OCI-LY7 (cell line): ENCODE measurements at regions of chrX and their contacts with region 1.

Region 1: GRCh38 chrX:153927922-153928760 is 2.1 kb upstream of the ARHGAP4 start:
- DNase-seq: peak; percentile 96
- H3K4me3 ChIP-seq: peak overlapping the region; percentile 99
- H3K27ac ChIP-seq: peak overlapping the region; percentile 100
- H3K4me1 ChIP-seq: peaks cover 42% of the 10 kb centered on the region
- CTCF ChIP-seq: no peak

Region 2: GRCh38 chrX:153794018-153794896 is 133.9 kb before region 1 on chrX and contains the starts of genes IDH3G and SSR4:
- CTCF ChIA-PET with region 1: no interaction called
- POLR2A ChIA-PET with region 1: interaction called, 4 read pairs
- intact Hi-C with region 1: loop called (anchors 1 kb)
- DNase-seq: peak; percentile 94
- H3K4me3 ChIP-seq: peak within 1 kb of the TSS; percentile 100
- H3K27ac ChIP-seq: peak within 1 kb of the TSS; percentile 66
- H3K4me1 ChIP-seq: peaks cover 14% of the 10 kb centered on the region
- CTCF ChIP-seq: no peak
- total RNA-seq, gene IDH3G: 52.5 and 53.2 TPM in 2 replicates
- total RNA-seq, gene SSR4: 121 and 165 TPM in 2 replicates

Region 3: GRCh38 chrX:153947009-153947769 is 19.0 kb after region 1 on chrX:
- CTCF ChIA-PET with region 1: interaction called, 11 read pairs
- POLR2A ChIA-PET with region 1: interaction called, 4 read pairs
- intact Hi-C with region 1: loop called (anchors 1 kb)
- DNase-seq: peak; percentile 86
- H3K4me3 ChIP-seq: no peak overlapping the region
- H3K27ac ChIP-seq: no peak overlapping the region
- H3K4me1 ChIP-seq: peaks cover 16% of the 10 kb centered on the region
- CTCF ChIP-seq: peak; percentile 88

Region 4: GRCh38 chrX:153952373-153953026 is 24.4 kb after region 1 on chrX:
- CTCF ChIA-PET with region 1: interaction called, 11 read pairs
- POLR2A ChIA-PET with region 1: interaction called, 4 read pairs
- intact Hi-C with region 1: loop called (anchors 1 kb)
- DNase-seq: no peak
- H3K4me3 ChIP-seq: no peak overlapping the region
- H3K27ac ChIP-seq: no peak overlapping the region
- H3K4me1 ChIP-seq: no peaks in the 10 kb centered on the region
- CTCF ChIP-seq: no peak

Region 5: DNA sequence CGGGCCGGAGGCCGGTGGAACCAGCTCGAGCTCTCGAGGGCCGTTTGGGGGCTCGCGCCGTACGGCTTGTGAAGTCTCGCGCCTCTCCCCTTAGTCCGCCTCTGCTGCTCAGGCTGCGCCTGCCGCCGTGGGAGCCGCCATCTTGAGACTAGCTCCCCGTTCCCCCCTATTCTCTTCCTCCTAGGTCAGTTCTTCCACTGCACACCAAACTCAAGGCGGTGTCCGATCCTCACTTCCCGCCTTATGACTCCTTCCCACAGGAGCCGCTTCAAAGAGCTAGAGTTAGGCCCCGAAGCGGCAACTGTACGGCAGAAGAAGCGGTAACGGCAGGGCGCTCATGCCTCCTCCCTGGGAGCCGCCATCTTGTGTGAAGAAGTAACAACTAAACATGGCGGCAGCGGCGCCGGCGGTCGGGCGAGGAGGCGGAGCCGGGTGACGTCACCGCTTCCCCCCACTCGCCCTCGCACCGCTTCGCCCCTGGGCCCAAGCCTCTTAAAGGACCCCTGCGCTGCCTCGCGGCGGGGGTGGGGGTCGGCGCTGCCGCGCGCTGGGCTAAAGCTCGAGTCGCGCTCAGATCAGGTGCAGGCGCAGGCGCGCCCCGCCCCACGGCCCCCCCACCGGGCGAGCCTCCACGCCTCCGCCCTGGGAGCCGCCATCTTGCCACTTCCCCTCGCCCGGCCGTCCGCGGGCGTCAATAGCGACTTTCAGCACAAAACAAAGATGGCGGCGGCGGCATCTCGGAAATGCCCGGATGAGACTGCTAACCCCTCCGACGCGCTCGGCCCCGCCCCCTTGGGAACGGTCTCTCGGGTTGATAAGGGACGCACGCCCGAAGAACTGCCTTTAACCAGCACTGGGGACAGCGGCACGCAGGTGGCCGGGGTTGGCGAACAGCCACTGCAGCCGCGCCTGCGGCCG is 43.6 kb after region 1 on chrX and contains the start of gene HCFC1:
- CTCF ChIA-PET with region 1: interaction called, 5 read pairs
- POLR2A ChIA-PET with region 1: interaction called, 33 read pairs
- intact Hi-C with region 1: loop called (anchors 2 kb)
- DNase-seq: peak; percentile 92
- H3K4me3 ChIP-seq: peak within 1 kb of the TSS; percentile 78
- H3K27ac ChIP-seq: peak within 1 kb of the TSS; percentile 89
- H3K4me1 ChIP-seq: peaks cover 37% of the 10 kb centered on the region
- CTCF ChIP-seq: no peak
- total RNA-seq, gene HCFC1: 51.9 and 64.2 TPM in 2 replicates

Region 6: DNA sequence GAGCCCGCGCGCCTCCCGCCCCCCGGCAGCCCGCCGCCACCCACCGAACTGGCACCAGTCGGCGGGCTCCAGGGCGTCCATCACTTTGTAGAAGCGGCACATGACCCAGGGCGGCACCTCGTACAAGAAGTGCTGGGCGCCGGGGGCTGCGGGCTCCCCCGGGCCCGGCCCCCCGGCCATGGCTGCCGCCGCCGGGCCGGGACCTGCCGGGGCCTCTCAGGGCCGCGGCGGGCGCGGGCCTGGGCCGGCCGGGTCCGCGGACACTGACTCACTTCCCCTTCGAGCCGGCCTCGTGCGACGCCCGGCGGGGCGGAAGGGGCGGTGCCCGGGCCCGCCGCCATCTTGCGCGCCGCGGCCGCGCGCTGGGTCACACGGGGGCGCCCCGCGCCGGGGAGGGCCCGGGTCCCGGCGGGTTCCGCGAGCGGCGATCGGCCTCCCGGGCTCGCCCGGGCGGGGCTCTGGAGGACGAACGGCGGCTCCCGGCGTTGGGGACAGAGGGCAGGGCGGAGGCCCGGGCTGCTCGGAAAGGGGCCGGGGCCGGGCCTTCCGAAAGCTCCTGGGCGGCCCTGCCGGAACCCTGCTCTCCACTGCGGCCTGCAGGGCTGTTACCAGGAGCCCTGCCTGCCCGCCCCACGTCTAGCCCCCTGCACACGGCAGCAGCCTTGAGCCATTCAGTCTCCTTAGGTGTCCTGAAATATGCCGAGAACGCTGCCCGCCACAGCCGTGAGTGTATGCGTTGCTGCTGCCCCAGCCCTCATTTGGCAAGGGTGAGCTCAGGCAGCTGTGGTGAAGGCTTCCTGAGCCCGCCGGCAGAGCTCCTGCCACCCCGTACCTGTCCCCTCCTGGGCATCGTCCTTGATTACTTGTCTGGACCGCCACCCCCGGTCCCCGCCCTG is 91.7 kb after region 1 on chrX and contains the start of gene IRAK1:
- CTCF ChIA-PET with region 1: no interaction called
- POLR2A ChIA-PET with region 1: interaction called, 3 read pairs
- intact Hi-C with region 1: loop called (anchors 1 kb)
- DNase-seq: peak; percentile 73
- H3K4me3 ChIP-seq: peak within 1 kb of the TSS; percentile 97
- H3K27ac ChIP-seq: peak within 1 kb of the TSS; percentile 76
- H3K4me1 ChIP-seq: peaks cover 29% of the 10 kb centered on the region
- CTCF ChIP-seq: no peak
- total RNA-seq, gene IRAK1: 56.8 and 75.5 TPM in 2 replicates

Region 7: DNA sequence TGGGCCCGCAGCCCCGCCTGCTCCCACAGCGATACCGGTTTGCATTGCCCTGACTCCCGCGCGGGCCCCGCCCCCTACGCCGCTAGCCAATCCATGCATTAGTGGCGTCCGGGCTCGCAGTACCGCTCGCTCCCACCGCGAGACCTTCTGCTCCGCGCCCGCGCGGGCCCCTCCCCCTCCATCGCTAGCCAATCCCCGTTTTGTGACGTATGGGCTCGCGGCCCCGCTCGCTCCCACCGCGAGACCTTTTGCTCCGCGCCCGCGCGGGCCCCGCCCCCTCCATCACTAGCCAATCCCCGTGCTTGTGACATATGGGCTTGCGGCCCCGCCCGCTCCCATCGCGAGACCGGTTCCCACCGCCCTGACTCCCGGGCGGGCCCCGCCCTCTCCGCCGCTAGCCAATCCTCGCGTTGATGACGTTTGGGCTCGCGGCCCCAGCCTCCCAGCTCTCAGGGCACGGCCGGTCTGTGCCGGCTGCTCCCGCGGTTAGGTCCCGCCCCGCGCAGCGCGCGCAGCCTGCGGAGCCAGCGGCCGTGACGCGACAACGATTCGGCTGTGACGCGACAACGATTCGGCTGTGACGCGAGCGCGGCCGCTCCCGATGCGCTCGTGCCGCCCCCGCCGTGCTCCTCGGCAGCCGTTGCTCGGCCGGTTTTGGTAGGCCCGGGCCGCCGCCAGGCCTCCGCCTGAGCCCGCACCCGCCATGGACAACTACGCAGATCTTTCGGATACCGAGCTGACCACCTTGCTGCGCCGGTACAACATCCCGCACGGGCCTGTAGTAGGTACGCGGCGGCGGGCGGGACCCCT is 450.8 kb after region 1 on chrX and contains the start of gene EMD:
- CTCF ChIA-PET with region 1: no interaction called
- POLR2A ChIA-PET with region 1: interaction called, 4 read pairs
- intact Hi-C with region 1: loop called (anchors 10 kb)
- DNase-seq: peak; percentile 97
- H3K4me3 ChIP-seq: peak within 1 kb of the TSS; percentile 88
- H3K27ac ChIP-seq: peak within 1 kb of the TSS; percentile 69
- H3K4me1 ChIP-seq: peaks cover 32% of the 10 kb centered on the region
- CTCF ChIP-seq: no peak
- total RNA-seq, gene EMD: 25.3 and 35.4 TPM in 2 replicates